ENCODE measurements at regions of chr2 and their contacts with region 1.

Region 1: GRCh38 chr2:26244309-26245121 is at the starts of genes HADHA and HADHB:
- DNase-seq: peak; percentile 82
- ATAC-seq: peak; percentile 95
- H3K4me3 ChIP-seq: peak within 1 kb of the TSS; percentile 79 to 85
- H3K27ac ChIP-seq: peak within 1 kb of the TSS; percentile 81
- H3K4me1 ChIP-seq: peaks cover 30% of the 10 kb centered on the region
- H3K27me3 ChIP-seq: no peaks in the 10 kb centered on the region
- CTCF ChIP-seq: peak; percentile 37; the same call in 1 of the 2 replicates
- total RNA-seq, gene HADHA: 148 TPM
- total RNA-seq, gene HADHB: 106 TPM

Region 2: DNA sequence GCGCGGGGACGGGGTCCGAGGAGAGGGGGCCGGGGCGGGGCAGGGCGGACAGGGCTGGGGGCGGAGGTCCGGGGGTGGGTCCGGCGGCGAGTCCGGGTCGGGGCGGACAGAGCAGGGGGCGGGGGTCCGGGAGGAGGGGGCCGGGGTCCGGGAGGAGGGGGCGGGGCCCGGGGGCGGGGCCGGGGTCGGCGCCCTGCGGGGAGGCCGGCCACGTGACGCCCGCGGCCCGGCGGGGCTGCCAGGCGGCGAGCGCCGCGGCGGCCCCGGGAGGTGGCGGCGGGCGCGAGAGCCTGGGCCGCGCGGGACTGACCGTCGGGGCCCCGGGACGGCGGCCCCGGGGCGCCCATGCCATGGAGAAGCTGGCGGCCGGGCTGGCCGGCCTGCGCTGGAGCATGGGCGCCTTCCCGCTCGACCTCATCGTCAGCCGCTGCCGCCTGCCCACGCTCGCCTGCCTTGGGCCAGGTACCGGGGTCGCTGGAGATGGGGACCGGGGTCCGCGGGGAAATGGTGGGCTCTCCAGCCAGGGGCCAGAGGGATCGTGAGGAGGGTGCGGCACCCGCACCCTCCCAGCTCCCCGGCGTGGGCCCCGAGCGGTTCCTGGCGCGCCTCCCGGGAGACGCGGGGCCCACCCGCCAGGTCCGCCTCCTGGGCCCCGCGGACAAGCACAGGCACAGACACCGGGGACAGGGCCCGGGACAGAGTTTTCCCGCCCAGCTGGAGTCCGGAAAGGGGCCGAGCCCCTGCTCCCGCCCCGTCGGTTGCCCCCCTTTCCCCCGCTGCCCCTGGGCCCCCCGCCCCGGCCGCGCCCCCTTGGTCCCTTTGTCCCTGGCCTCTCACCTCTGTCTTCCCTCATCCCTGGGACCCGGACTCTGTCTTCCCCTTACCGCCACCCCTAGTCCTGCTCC is 71.4 kb before region 1 on chr2 and contains the start of gene GAREM2:
- CTCF ChIA-PET with region 1: no interaction called
- POLR2A ChIA-PET with region 1: interaction called, 17 read pairs
- in situ Hi-C with region 1: no loop called
- intact Hi-C with region 1: no loop called
- DNase-seq: no peak
- ATAC-seq: peak; percentile 55
- H3K4me3 ChIP-seq: peak within 1 kb of the TSS; percentile 47 to 54
- H3K27ac ChIP-seq: no peak within 1 kb of the TSS
- H3K4me1 ChIP-seq: peaks cover 6% of the 10 kb centered on the region
- H3K27me3 ChIP-seq: no peaks in the 10 kb centered on the region
- CTCF ChIP-seq: no peak
- total RNA-seq, gene GAREM2: 12.4 TPM

Region 3: GRCh38 chr2:26255759-26256384 is 11.4 kb after region 1 on chr2:
- CTCF ChIA-PET with region 1: no interaction called
- POLR2A ChIA-PET with region 1: interaction called, 13 read pairs
- in situ Hi-C with region 1: no loop called
- intact Hi-C with region 1: no loop called
- DNase-seq: no peak
- ATAC-seq: no peak
- H3K4me3 ChIP-seq: no peak overlapping the region
- H3K27ac ChIP-seq: no peak overlapping the region
- H3K4me1 ChIP-seq: no peaks in the 10 kb centered on the region
- H3K27me3 ChIP-seq: no peaks in the 10 kb centered on the region
- CTCF ChIP-seq: no peak

Region 4: GRCh38 chr2:26330113-26330549 is 85.6 kb after region 1 on chr2:
- CTCF ChIA-PET with region 1: interaction called, 3 read pairs
- POLR2A ChIA-PET with region 1: no interaction called
- in situ Hi-C with region 1: no loop called
- intact Hi-C with region 1: loop called (anchors 10 kb)
- DNase-seq: peak; percentile 71
- ATAC-seq: peak; percentile 98
- H3K4me3 ChIP-seq: no peak overlapping the region
- H3K27ac ChIP-seq: no peak overlapping the region
- H3K4me1 ChIP-seq: no peaks in the 10 kb centered on the region
- H3K27me3 ChIP-seq: no peaks in the 10 kb centered on the region
- CTCF ChIP-seq: peak; percentile 94

Region 5: GRCh38 chr2:26438526-26438925 is 194.0 kb after region 1 on chr2:
- CTCF ChIA-PET with region 1: no interaction called
- POLR2A ChIA-PET with region 1: no interaction called
- in situ Hi-C with region 1: no loop called
- intact Hi-C with region 1: no loop called
- DNase-seq: no peak
- ATAC-seq: no peak
- H3K4me3 ChIP-seq: no peak overlapping the region
- H3K27ac ChIP-seq: no peak overlapping the region
- H3K4me1 ChIP-seq: no peaks in the 10 kb centered on the region; the same call in 1 of the 2 replicates
- H3K27me3 ChIP-seq: no peaks in the 10 kb centered on the region
- CTCF ChIP-seq: no peak

Measured in Panc1 (cell line).